ENCODE measurements at regions of chr11 and their contacts with region 1.

Region 1: GRCh38 chr11:65551572-65552398 is 6.4 kb downstream of the LTBP3 start:
- DNase-seq: peak in 1 of 2 experiments; percentile 92
- H3K4me3 ChIP-seq: no peak overlapping the region
- H3K27ac ChIP-seq: no peak overlapping the region
- H3K4me1 ChIP-seq: peaks cover 0 to 36% (median 27%) of the 10 kb centered on the region in 4 experiments; a peak in 6 of 7 replicates
- H3K27me3 ChIP-seq: peaks cover 2 to 39% (median 26%) of the 10 kb centered on the region in 4 experiments; a peak in 6 of 7 replicates
- CTCF ChIP-seq: peak in 2 of 3 experiments; percentile 74 to 84; a peak in 3 of 4 replicates
- EP300 ChIP-seq: no peak
- POLR2A ChIP-seq: no peak
- RAD21 ChIP-seq: peak; percentile 36 to 58

Region 2: GRCh38 chr11:65575568-65576231 is 23.9 kb after region 1 on chr11 and contains the start of gene EHBP1L1:
- CTCF ChIA-PET with region 1: interaction called, 284 read pairs
- POLR2A ChIA-PET with region 1: interaction called, 10 read pairs
- DNase-seq: no peak
- H3K4me3 ChIP-seq: peak within 1 kb of the TSS; percentile 27 to 63 (median 40)
- H3K27ac ChIP-seq: no peak within 1 kb of the TSS
- H3K4me1 ChIP-seq: peaks cover 13 to 31% (median 20%) of the 10 kb centered on the region in 4 experiments; a peak in 6 of 7 replicates
- H3K27me3 ChIP-seq: peaks cover 8 to 39% (median 28%) of the 10 kb centered on the region in 4 experiments
- CTCF ChIP-seq: no peak
- EP300 ChIP-seq: no peak
- POLR2A ChIP-seq: no peak
- RAD21 ChIP-seq: no peak
- total RNA-seq, gene EHBP1L1: 6.6 and 7.9 TPM in 2 replicates

Measured in H1 (cell line).